Caco-2 (cell line): ENCODE measurements at regions of chr9 and their contacts with region 1.

Region 1: DNA sequence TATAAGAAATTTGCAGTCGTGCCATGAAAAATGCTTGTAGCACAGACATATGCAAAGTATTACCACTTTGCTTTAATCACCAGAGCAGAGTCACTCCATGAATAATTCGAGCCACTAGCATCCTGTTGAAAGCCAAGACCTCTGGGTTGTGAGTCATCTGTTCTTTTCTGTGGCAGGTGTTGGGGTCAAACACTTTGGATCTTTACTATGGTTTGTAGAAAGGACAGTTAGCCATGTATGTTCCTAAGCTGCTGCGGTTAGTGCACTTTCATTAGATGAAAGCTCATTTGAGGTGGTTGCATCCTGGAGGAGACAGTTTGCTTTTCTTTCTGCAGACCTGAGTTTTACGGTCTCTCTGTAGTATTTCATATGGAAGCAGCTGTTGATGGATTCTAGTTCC is 223.7 kb downstream of the DMRT2 start:
- DNase-seq: no peak
- H3K4me3 ChIP-seq: no peak overlapping the region
- H3K4me3 Mint-ChIP-seq: no peak overlapping the region
- H3K27ac Mint-ChIP-seq: no peak overlapping the region
- H3K4me1 ChIP-seq: peaks cover 10% of the 10 kb centered on the region
- H3K4me1 Mint-ChIP-seq: peaks cover 16% of the 10 kb centered on the region
- H3K27me3 ChIP-seq: no peaks in the 10 kb centered on the region
- H3K27me3 Mint-ChIP-seq: no peaks in the 10 kb centered on the region
- CTCF ChIP-seq: no peak

Region 2: GRCh38 chr9:1231998-1232919 is 41.6 kb before region 1 on chr9:
- CTCF ChIA-PET with region 1: no interaction called
- POLR2A ChIA-PET with region 1: no interaction called
- intact Hi-C with region 1: loop called (anchors 5 kb)
- DNase-seq: peak; percentile 31 to 49
- H3K4me3 ChIP-seq: 0 out of 2 replicates have a peak overlapping the region, but pooled peaks have one; percentile 12
- H3K4me3 Mint-ChIP-seq: peak overlapping the region; percentile 65
- H3K27ac Mint-ChIP-seq: no peak overlapping the region
- H3K4me1 ChIP-seq: peaks cover 9% of the 10 kb centered on the region; the same call in 1 of the 2 replicates
- H3K4me1 Mint-ChIP-seq: peaks cover 5% of the 10 kb centered on the region
- H3K27me3 ChIP-seq: no peaks in the 10 kb centered on the region
- H3K27me3 Mint-ChIP-seq: no peaks in the 10 kb centered on the region
- CTCF ChIP-seq: no peak